Activated CD8-positive, alpha-beta T cell treated with anti-CD3 and anti-CD28 coated beads, Interleukin-2, amount 10 ng/mL, durations not matched to agents 7 days and 5 days (primary cell): ENCODE measurements at regions of chr1 and their contacts with region 1.

Region 1: DNA sequence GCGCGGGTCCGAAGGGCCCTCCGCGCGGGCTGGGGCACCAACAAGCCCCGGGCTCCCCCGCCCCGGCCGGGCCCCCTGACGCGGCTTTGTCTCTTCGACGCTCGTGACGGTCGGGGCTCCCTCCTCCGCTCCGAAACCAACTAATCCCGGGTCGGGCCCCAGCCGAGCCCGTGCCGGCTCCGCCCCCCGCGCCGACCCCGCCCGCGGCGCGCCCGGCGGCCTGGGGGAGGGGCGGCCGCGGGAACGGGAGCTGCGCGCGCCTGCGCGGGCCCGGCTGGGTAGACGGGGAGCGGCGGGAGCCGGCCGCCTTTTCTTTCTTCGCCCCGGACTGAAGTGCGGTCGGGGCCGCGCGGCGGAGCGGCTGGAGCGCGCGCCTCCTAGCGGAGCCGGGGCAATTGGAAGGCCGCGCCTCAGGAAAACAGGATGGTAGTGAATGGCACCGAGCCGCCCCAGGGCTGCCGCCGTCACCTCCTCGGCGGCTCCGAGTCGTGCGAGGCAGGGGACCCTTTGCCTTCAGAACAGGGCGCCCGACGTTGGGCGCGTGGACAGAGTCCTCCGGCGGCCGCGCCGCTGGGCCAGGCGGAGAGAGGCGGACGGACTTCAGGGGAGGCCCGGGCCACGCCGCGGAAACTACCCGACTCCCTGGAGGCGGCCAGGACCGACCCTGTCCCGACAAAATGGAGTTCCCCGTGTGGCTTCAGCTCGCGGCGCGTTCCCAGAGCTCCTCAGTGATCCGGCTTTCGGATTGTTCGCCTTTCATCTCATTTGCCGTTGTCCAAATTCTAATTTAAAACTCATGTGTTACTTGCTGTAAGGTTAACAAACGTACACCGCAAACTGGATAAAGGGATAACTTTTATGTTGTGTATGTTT is at the start of gene TP53BP2:
- DNase-seq: peak; percentile 82
- ATAC-seq: peak; percentile 83
- H3K4me3 Mint-ChIP-seq: peak within 1 kb of the TSS; percentile 85
- H3K27ac Mint-ChIP-seq: peak within 1 kb of the TSS; percentile 95
- H3K4me1 Mint-ChIP-seq: peaks cover 31% of the 10 kb centered on the region
- H3K27me3 Mint-ChIP-seq: peaks cover 7% of the 10 kb centered on the region
- total RNA-seq, gene TP53BP2: 31.4 to 35.2 TPM

Region 2: GRCh38 chr1:223500560-223501425 is 345.3 kb before region 1 on chr1:
- CTCF ChIA-PET with region 1: no interaction called
- POLR2A ChIA-PET with region 1: no interaction called
- DNase-seq: no peak
- ATAC-seq: no peak
- H3K4me3 Mint-ChIP-seq: no peak overlapping the region
- H3K27ac Mint-ChIP-seq: peak overlapping the region; percentile 0
- H3K4me1 Mint-ChIP-seq: no peaks in the 10 kb centered on the region
- H3K27me3 Mint-ChIP-seq: no peaks in the 10 kb centered on the region

Region 3: DNA sequence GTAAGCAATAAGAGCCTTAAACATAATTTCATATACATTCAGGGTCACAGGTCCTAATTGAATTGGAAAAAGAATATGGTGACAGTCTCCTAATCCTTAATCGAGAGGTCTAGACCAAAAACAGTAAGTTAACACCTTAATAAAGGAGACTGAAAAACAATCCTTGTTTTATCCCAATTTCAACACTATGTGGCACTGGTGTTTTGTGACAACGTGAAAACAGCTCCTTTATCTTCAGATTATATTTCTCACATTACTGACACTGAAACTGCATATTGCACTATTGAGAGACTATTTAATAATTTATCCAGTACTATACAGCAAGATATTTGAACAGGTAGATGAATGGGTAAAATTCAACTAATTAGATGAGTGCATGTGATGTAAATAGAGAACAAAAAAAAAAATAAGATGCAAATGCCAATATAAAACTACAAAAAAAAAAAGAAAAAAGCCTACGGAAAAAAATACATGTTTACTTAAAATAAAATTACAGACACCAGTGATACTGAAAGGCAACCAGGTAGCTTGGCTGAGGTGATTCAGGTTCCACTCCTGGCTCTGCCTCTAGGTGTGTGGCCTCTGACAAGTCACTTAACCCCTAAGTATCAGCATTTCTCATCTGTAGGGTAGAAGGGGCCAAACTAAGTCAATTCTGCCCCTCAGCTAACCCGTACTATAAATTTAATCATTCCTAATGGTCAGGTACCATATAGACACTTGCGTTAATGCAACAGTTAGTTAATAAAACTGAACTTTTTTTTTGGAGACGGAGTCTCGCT is 34.2 kb before region 1 on chr1:
- CTCF ChIA-PET with region 1: interaction called, 12 read pairs
- POLR2A ChIA-PET with region 1: interaction called, 13 read pairs
- DNase-seq: no peak
- ATAC-seq: peak; percentile 55
- H3K4me3 Mint-ChIP-seq: no peak overlapping the region
- H3K27ac Mint-ChIP-seq: no peak overlapping the region
- H3K4me1 Mint-ChIP-seq: peaks cover 20% of the 10 kb centered on the region
- H3K27me3 Mint-ChIP-seq: no peaks in the 10 kb centered on the region

Region 4: DNA sequence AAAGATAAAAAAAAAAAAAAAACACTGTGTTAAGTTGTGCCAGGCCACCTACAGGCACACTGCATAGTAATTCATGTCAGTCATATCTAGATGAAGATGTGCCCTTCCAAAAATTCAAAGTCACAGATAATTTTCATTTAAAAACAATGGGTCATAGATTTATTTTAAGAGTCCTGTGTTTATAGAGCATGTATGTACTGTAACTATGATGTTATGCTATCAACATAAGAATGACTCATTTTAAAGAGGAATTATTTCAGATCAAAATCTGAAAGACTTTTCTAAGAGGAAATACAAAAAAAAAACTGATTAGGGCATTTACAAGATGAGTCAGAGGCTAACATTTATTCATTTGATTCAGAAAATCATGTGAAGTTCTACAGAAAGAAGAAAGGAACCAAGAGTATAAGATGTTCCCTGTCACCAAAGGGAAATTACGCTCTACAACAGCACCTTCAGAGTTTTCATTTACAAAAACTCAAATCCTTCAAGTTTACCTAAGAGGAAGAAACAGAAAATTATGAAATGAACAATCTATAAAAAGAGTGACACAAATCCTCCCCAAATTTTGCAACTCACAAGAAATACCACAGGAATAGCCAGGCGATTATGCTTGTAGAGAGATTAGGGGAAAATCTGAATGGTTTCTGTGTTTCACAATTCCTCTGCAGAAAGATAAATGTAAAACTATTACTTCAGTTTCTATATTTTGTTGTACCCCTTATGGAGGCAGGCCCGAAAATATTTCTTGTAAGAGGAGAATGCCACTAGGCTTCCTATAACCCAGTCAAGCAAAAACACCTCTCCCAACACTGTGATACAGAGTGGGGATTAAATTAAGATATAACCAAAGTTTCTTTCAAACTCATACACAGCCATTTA is 14.1 kb before region 1 on chr1:
- CTCF ChIA-PET with region 1: interaction called, 13 read pairs
- POLR2A ChIA-PET with region 1: interaction called, 48 read pairs
- DNase-seq: no peak
- ATAC-seq: peak; percentile 40
- H3K4me3 Mint-ChIP-seq: peak overlapping the region; percentile 2
- H3K27ac Mint-ChIP-seq: peak overlapping the region; percentile 6
- H3K4me1 Mint-ChIP-seq: peaks cover 26% of the 10 kb centered on the region
- H3K27me3 Mint-ChIP-seq: no peaks in the 10 kb centered on the region

Region 5: GRCh38 chr1:223870617-223871574 is 24.9 kb after region 1 on chr1:
- CTCF ChIA-PET with region 1: no interaction called
- POLR2A ChIA-PET with region 1: no interaction called
- DNase-seq: no peak
- ATAC-seq: no peak
- H3K4me3 Mint-ChIP-seq: no peak overlapping the region
- H3K27ac Mint-ChIP-seq: no peak overlapping the region
- H3K4me1 Mint-ChIP-seq: no peaks in the 10 kb centered on the region
- H3K27me3 Mint-ChIP-seq: peaks cover 39% of the 10 kb centered on the region